ENCODE measurements at regions of chr15 and their contacts with region 1.

Region 1: GRCh38 chr15:31488426-31489204 is 162.0 kb downstream of the KLF13 start:
- DNase-seq: peak; percentile 54
- H3K4me3 Mint-ChIP-seq: no peak overlapping the region
- H3K27ac Mint-ChIP-seq: peak overlapping the region; percentile 65
- H3K4me1 Mint-ChIP-seq: peaks cover 56% of the 10 kb centered on the region
- H3K27me3 Mint-ChIP-seq: peaks cover 3% of the 10 kb centered on the region

Region 2: DNA sequence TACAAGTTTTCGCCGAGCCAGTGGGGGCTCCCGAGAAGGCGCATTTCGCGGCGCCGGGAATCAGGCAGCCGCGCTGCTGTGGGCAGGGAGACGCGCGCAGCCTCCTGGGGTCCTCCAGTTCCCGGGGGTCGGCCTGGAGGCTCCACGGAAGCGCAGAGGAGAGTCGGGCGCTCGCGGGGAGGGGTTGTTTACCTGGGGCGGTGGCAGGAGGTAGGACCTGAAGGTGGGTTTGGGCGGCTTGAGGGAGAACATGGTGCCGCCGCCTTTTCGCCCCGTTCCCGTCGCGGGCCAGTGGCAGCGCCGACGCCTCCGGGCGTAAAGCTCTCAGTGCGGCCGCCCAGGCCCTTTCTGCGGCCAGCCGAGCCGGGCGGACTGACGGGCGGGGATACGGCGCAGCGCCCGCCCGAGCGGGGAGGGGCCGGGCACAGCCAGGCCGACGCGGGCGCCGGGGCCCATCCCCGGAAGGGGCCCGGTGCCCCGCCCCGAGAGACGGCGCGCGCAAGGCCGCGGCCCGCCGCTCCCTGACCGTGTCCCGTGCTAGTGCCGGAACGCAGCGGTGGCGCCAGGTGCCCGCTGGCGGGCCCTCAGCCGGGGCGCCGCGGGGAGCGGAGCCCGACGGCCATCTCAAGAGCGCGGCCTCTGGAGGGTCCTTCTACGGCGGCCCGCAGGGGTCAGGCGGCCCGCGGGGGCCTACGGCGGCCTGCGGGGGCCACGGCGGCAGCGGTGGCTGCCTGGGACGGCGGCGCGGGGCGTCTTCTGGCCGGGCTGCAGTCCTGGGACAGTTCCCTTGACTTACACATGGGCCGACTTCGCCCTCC is 497.2 kb before region 1 on chr15 and contains the start of gene MTMR10:
- CTCF ChIA-PET with region 1: interaction called, 3 read pairs
- POLR2A ChIA-PET with region 1: no interaction called
- intact Hi-C with region 1: loop called (anchors 10 kb)
- DNase-seq: peak; percentile 76
- H3K4me3 Mint-ChIP-seq: peak within 1 kb of the TSS; percentile 87
- H3K27ac Mint-ChIP-seq: peak within 1 kb of the TSS; percentile 72
- H3K4me1 Mint-ChIP-seq: peaks cover 26% of the 10 kb centered on the region
- H3K27me3 Mint-ChIP-seq: no peaks in the 10 kb centered on the region
- total RNA-seq, gene MTMR10: 10.8 to 12.5 TPM

Region 3: GRCh38 chr15:31013538-31014228 is 474.9 kb before region 1 on chr15:
- CTCF ChIA-PET with region 1: no interaction called
- POLR2A ChIA-PET with region 1: no interaction called
- intact Hi-C with region 1: no loop called
- DNase-seq: no peak
- H3K4me3 Mint-ChIP-seq: no peak overlapping the region
- H3K27ac Mint-ChIP-seq: no peak overlapping the region
- H3K4me1 Mint-ChIP-seq: no peaks in the 10 kb centered on the region
- H3K27me3 Mint-ChIP-seq: peaks cover 14% of the 10 kb centered on the region

Region 4: GRCh38 chr15:31215490-31216214 is 273.0 kb before region 1 on chr15:
- CTCF ChIA-PET with region 1: interaction called, 86 read pairs
- POLR2A ChIA-PET with region 1: interaction called, 3 read pairs
- intact Hi-C with region 1: loop called (anchors 1 kb)
- DNase-seq: peak; percentile 88
- H3K4me3 Mint-ChIP-seq: peak overlapping the region; percentile 68
- H3K27ac Mint-ChIP-seq: peak overlapping the region; percentile 56
- H3K4me1 Mint-ChIP-seq: peaks cover 15% of the 10 kb centered on the region
- H3K27me3 Mint-ChIP-seq: no peaks in the 10 kb centered on the region

Region 5: GRCh38 chr15:31344823-31345605 is 143.6 kb before region 1 on chr15:
- CTCF ChIA-PET with region 1: interaction called, 15 read pairs
- POLR2A ChIA-PET with region 1: interaction called, 6 read pairs
- intact Hi-C with region 1: no loop called
- DNase-seq: peak; percentile 63
- H3K4me3 Mint-ChIP-seq: peak overlapping the region; percentile 93
- H3K27ac Mint-ChIP-seq: peak overlapping the region; percentile 100
- H3K4me1 Mint-ChIP-seq: peaks cover 98% of the 10 kb centered on the region
- H3K27me3 Mint-ChIP-seq: no peaks in the 10 kb centered on the region

Region 6: DNA sequence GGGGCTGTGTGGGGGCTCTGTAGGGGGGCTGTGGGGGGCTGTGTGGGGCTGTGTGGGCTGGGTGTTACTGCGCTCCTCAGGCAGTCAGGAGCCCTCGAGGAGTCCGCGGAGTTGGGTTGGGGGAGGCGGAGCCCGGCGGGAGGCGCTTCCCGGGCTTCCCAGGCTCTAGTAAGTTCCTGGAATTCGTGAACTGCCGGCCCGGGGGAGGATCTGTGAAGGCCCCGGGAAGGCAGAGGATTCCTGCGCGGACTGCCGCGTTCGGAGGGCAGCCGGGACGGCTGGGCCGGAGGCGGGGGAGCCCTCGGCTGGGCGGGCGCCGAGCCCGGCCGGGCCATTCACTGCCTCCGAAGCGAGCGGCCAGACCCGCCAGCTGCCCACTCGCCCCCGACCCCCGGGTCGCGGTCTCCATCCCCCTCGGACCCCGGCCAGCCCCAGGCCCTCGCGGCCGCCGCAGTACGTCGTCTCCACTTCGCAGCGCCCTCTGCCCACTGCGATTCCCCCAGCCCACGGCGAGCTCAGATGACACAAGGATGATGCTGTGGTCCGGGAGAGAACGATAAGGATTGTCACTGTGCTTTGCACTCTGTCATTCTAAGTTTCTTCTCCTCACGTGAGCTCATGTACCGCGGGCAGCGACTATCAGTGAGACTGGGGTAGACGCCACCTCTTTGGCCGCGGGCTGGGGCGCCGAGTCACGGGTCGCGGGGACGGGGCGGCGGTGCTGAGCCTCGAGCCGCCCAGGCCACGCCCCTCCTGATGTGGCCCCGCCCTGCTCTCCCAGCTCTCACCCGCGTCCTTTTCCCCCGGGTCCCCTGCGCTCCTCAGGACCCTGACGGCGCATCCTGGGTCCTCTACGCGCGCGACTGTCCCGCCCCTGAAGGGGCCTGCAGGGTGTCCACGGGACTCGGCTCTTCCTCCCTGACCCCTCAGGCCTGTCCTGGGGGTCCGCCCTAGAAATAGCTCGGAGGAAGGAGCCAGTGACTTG is 96.6 kb before region 1 on chr15:
- CTCF ChIA-PET with region 1: interaction called, 21 read pairs
- POLR2A ChIA-PET with region 1: interaction called, 5 read pairs
- intact Hi-C with region 1: loop called (anchors 2 kb)
- DNase-seq: peak; percentile 90
- H3K4me3 Mint-ChIP-seq: peak overlapping the region; percentile 87
- H3K27ac Mint-ChIP-seq: peak overlapping the region; percentile 87
- H3K4me1 Mint-ChIP-seq: peaks cover 34% of the 10 kb centered on the region
- H3K27me3 Mint-ChIP-seq: no peaks in the 10 kb centered on the region

Region 7: GRCh38 chr15:31458591-31459399 is 29.8 kb before region 1 on chr15:
- CTCF ChIA-PET with region 1: interaction called, 51 read pairs
- POLR2A ChIA-PET with region 1: interaction called, 9 read pairs
- intact Hi-C with region 1: loop called (anchors 1 kb)
- DNase-seq: peak; percentile 84
- H3K4me3 Mint-ChIP-seq: peak overlapping the region; percentile 68
- H3K27ac Mint-ChIP-seq: peak overlapping the region; percentile 92
- H3K4me1 Mint-ChIP-seq: peaks cover 38% of the 10 kb centered on the region
- H3K27me3 Mint-ChIP-seq: no peaks in the 10 kb centered on the region

Measured in activated CD4-positive, alpha-beta memory T cell treated with anti-CD3 and anti-CD28 coated beads for 36 hours (primary cell).